Gastrocnemius medialis (tissue), 4 donors: ENCODE measurements at regions of chr2 and their contacts with region 1.

Region 1: DNA sequence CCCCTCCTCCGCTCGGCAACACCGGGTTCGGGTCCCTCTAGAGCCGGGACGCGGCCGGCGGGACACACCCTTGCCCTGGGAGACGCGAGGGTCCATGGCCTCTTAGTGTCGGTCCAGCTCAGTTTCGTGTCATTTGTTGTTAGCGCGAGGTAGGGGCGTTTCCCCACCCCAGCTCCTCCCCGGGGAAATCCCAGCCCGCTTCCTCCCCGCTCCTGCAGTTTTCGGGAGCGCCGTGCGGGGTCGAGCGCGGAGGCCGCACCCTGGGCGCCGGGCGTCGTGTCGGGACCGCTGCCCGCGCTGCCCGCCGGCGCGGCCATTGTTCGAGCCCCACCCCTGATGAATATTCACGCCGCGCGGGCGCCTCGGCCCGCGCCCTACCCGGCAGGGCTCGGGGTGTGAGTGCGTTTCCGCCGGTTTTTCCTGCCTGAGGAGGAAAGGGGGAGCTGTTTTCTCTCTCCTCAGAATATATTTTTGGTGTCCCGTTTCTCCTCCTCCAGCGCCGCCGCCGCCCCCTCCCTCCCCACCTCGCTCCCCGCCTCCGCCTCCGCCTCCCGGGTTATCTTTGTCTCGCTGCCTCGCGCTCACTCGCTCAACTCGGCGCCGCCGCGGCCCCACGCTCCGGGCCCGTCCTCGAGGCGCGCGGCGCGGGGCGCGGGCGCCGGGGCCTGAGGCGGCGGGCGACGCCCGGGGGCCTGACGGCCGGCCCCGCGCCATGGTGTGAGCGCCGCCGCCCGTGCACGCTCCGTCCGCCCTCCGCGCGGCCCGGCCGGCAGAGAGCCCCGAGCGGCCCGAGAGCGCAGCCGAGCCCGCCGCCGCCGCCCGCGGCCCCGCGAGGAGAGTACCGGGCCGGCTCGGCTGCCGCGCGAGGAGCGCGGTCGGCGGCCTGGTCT is at the start of gene MAP4K4:
- DNase-seq: peak; percentile 70 to 77
- ATAC-seq: peak; percentile 72 to 73
- H3K4me3 ChIP-seq: peak within 1 kb of the TSS; percentile 73 to 85 (median 84)
- H3K27ac ChIP-seq: peak within 1 kb of the TSS; percentile 83 to 92 (median 86)
- H3K4me1 ChIP-seq: peaks cover 28 to 30% of the 10 kb centered on the region in 2 donors
- H3K27me3 ChIP-seq: no peaks in the 10 kb centered on the region
- CTCF ChIP-seq: peak in 3 of 5 experiments; percentile 15 to 46 (median 21)
- POLR2A ChIP-seq: peak; percentile 38 to 53
- total RNA-seq, gene MAP4K4: 40.0 to 85.5 (median 59.5) TPM

Region 2: DNA sequence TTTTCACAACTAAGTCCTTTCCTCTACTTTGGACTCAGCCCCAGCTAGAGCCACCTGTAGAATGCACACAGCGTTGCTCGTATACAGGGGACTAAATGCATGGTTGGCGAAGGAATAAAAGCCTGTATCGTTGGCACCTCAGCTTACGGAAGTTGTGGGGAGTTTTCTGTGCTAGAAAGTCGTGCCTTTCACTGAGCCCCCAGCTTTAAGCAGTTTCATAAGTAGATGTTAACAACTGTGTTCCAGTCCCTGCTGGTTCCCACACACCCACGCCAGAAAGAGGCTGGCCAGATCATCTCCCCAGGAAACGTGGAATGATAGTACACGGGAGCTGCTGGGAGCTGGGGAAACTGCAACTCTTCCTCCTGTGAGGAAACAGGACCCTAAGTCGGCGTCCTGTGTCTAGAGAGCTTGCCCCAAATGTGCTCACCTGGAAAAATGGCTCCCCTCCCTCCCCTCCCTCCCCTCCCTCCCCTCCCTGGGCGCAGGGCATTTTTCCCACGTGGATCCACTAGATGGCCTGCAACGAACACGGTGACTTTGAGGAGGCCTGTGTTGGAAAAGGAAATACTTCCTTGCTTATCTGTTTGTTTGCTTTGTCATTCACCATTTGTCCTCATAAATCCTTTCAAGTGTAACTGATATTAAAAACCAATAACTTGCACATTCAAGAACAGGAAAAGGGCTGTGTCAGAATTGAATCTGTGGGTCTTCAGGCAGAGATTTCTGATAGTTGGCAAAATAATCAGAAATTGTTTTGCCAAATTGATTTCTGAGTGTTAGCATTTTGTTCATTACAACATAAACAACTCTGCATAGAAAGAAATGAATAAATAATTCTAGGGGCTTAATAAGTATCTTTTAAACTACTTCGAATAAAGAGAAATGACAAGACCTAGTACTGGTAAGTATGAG is 178.5 kb before region 1 on chr2:
- in situ Hi-C with region 1: no loop called
- intact Hi-C with region 1: loop called (anchors 10 kb)
- DNase-seq: peak; percentile 16 to 37
- ATAC-seq: peak; percentile 84 to 93
- H3K4me3 ChIP-seq: no peak overlapping the region
- H3K27ac ChIP-seq: peak overlapping the region in 1 of 4 donors; percentile 7
- H3K4me1 ChIP-seq: peaks cover 0 to 9% of the 10 kb centered on the region in 2 donors
- H3K27me3 ChIP-seq: no peaks in the 10 kb centered on the region
- CTCF ChIP-seq: peak in 4 of 5 experiments; percentile 6 to 59 (median 44)
- POLR2A ChIP-seq: no peak

Region 3: GRCh38 chr2:101558740-101559519 is 138.4 kb before region 1 on chr2:
- in situ Hi-C with region 1: no loop called
- intact Hi-C with region 1: loop called (anchors 2 kb)
- DNase-seq: no peak
- ATAC-seq: peak; percentile 93 to 95
- H3K4me3 ChIP-seq: peak overlapping the region; percentile 4 to 34 (median 20)
- H3K27ac ChIP-seq: peak overlapping the region; percentile 80 to 83 (median 82)
- H3K4me1 ChIP-seq: peaks cover 15 to 20% of the 10 kb centered on the region in 2 donors
- H3K27me3 ChIP-seq: no peaks in the 10 kb centered on the region
- CTCF ChIP-seq: no peak
- POLR2A ChIP-seq: no peak

Region 4: DNA sequence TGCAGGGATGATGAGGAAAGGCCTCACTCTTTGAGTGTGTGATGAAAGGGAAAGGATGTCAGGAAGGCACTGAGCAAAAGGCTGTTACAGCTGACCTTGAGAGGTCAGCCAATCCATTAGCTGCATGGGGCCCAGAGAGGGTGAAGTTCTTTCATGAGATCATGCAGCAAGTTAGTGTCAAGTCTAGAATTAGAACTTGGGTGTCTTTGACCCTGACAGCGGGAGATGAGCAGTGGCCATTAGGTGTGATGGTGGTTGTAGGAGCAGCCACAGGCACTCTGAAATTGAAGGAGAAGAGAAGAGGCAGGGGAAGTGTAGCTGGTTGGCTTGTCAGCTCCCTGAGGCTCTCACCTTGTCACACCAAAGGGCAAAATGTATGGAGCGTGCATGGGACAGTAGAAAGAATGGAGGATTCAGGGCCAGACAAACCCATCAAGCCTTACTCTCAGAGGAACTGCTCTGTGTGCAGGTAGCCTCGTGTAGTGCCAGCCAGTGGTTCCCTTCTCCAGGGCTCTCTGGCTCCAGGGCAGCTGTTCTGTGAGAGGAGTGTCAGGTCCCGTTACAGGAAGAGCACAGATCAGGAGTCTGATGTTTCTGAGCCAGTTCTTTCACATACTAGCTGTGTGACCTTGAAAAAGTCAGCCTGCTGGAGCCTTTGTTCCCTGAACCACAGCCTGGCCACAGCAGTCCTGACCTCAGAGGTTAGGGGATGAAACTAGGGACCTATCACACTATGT is 36.1 kb after region 1 on chr2:
- in situ Hi-C with region 1: no loop called
- intact Hi-C with region 1: loop called (anchors 2 kb)
- DNase-seq: peak; percentile 66 to 89
- ATAC-seq: peak; percentile 82 to 84
- H3K4me3 ChIP-seq: no peak overlapping the region
- H3K27ac ChIP-seq: peak overlapping the region; percentile 79 to 90 (median 85)
- H3K4me1 ChIP-seq: peaks cover 67 to 85% of the 10 kb centered on the region in 2 donors
- H3K27me3 ChIP-seq: no peaks in the 10 kb centered on the region
- CTCF ChIP-seq: no peak
- POLR2A ChIP-seq: peak in 1 of 2 donors; percentile 30

Region 5: DNA sequence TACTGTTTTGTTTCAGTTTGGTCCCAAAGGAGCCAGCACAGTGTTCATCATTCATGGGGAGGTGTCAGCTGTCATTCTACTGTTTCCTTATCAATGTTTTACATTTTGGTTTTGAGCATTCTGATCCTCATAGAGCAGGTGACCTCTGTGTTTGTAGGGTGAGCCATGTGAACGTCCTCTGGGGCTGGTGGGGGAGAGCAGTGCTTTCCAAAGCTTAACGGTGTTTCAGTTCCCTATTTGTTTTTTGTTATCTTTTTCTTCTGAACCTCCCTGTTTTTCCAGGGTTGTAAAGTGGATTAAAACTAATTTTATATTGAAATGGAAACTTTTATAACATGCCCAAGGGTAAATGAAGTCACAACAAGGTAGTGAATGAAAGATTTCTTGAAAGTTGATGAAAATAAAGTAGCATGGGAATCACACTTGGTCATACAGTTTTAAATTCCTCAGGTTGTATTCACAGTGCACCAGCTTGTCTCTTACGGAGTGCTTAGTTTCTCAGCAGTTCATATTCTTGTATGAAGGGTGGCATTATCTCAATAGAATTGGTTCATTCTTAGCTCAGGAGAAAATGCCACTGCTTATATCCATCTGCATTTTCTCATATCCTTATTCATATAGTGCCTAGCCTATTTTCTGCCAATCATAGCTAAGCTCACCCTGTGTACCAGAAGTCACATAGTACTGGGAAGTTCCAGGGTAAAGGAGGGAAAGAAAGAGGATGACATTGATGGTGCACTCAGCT is 54.7 kb after region 1 on chr2:
- in situ Hi-C with region 1: no loop called
- intact Hi-C with region 1: no loop called
- DNase-seq: no peak
- ATAC-seq: no peak
- H3K4me3 ChIP-seq: no peak overlapping the region
- H3K27ac ChIP-seq: peak overlapping the region in 1 of 4 donors; percentile 36
- H3K4me1 ChIP-seq: peaks cover 50 to 56% of the 10 kb centered on the region in 2 donors
- H3K27me3 ChIP-seq: no peaks in the 10 kb centered on the region
- CTCF ChIP-seq: no peak
- POLR2A ChIP-seq: no peak

Region 6: GRCh38 chr2:101823347-101823791 is 126.0 kb after region 1 on chr2:
- in situ Hi-C with region 1: loop called in 2 of 4 experiments (anchors 10 kb)
- intact Hi-C with region 1: no loop called
- DNase-seq: peak; percentile 13 to 42
- ATAC-seq: peak; percentile 73 to 77
- H3K4me3 ChIP-seq: no peak overlapping the region
- H3K27ac ChIP-seq: no peak overlapping the region
- H3K4me1 ChIP-seq: peaks cover 15 to 17% of the 10 kb centered on the region in 2 donors
- H3K27me3 ChIP-seq: no peaks in the 10 kb centered on the region
- CTCF ChIP-seq: peak; percentile 24 to 67 (median 48)
- POLR2A ChIP-seq: no peak

Region 7: DNA sequence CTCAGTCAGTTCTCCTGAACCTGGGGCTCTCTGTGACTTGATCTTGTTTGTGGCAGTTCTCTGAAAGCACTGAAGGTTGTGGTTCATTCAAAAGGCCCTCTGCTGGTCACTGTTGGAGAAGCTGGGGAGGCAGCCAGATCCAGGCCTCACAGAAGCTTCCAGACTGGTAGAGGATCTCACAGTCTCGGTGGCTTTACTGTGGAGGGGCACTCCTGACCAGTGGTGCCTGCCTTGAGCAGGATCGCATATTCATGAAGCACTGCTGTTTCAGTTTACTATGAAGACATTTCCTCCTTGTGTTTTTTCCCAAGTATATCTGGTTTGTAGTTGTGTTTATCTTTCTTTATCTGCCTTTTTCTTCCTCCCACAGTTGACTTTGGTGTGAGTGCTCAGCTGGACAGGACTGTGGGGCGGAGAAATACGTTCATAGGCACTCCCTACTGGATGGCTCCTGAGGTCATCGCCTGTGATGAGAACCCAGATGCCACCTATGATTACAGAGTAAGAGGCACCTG is 134.0 kb after region 1 on chr2:
- in situ Hi-C with region 1: loop called (anchors 5 to 10 kb)
- intact Hi-C with region 1: loop called (anchors 1 kb)
- DNase-seq: peak; percentile 47 to 71
- ATAC-seq: peak; percentile 77 to 95
- H3K4me3 ChIP-seq: no peak overlapping the region
- H3K27ac ChIP-seq: peak overlapping the region; percentile 23 to 50 (median 34)
- H3K4me1 ChIP-seq: peaks cover 11 to 12% of the 10 kb centered on the region in 2 donors
- H3K27me3 ChIP-seq: no peaks in the 10 kb centered on the region
- CTCF ChIP-seq: peak; percentile 55 to 83 (median 73)
- POLR2A ChIP-seq: no peak